ENCODE measurements at regions of chr12 and their contacts with region 1.

Region 1: DNA sequence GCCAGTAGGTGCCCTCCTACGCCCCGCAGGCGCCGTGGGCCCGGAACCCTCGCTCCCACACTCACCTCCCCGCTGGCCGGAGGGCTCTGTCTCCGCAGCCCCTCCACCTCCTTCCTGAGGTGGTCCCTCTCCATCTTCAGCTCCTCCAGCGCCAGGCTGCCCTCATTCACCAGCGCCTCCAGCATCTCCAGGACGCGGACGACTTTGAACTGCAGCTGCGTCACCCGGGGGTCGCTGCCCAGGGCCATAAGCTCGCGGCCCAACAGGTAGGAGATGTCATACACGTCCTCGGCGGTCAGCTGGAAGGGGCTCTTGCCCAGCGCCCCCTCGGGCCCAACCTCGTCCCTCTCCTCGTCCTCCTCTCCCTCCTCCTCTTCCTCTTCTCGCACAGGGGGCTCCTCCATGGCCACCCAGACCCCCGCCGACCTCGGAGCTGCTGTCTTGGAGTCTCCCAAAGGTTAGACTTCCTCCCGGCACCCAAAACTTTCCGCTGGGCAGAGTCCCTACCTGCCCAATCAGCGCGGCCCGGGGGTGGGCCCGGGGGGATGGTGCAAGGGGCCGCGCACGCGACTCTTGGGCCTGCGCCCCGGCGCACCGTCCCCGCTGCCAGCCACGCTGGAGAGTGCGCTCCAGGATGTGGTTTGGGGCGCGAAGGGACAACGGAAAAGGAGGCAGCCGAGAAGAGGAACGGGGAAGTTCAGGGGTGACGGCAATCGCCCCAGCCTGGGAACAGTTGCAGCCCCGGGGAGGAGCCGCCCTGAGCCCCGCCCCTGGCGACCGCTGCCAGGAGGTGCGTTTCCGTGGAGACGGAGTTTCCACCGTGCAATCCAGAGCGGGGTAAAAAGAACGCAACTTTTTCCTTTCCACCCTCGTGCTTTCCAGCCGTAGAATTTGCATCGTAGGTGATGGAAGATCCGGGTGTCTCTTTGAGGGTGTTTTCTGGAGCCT is at the start of gene RILPL2:
- DNase-seq: peak; percentile 92
- ATAC-seq: peak; percentile 82
- H3K4me3 Mint-ChIP-seq: peak within 1 kb of the TSS; percentile 99
- H3K27ac Mint-ChIP-seq: peak within 1 kb of the TSS; percentile 93
- H3K4me1 Mint-ChIP-seq: peaks cover 29% of the 10 kb centered on the region
- H3K27me3 Mint-ChIP-seq: no peaks in the 10 kb centered on the region
- total RNA-seq, gene RILPL2: 5.3 to 5.5 TPM

Region 2: GRCh38 chr12:123286652-123287373 is 149.5 kb before region 1 on chr12:
- POLR2A ChIA-PET with region 1: no interaction called
- DNase-seq: no peak
- ATAC-seq: no peak
- H3K4me3 Mint-ChIP-seq: no peak overlapping the region
- H3K27ac Mint-ChIP-seq: no peak overlapping the region
- H3K4me1 Mint-ChIP-seq: no peaks in the 10 kb centered on the region
- H3K27me3 Mint-ChIP-seq: no peaks in the 10 kb centered on the region

Region 3: GRCh38 chr12:123449249-123449733 is 13.0 kb after region 1 on chr12:
- POLR2A ChIA-PET with region 1: interaction called, 19 read pairs
- DNase-seq: no peak
- ATAC-seq: no peak
- H3K4me3 Mint-ChIP-seq: no peak overlapping the region
- H3K27ac Mint-ChIP-seq: peak overlapping the region; percentile 71
- H3K4me1 Mint-ChIP-seq: peaks cover 14% of the 10 kb centered on the region
- H3K27me3 Mint-ChIP-seq: no peaks in the 10 kb centered on the region

Region 4: DNA sequence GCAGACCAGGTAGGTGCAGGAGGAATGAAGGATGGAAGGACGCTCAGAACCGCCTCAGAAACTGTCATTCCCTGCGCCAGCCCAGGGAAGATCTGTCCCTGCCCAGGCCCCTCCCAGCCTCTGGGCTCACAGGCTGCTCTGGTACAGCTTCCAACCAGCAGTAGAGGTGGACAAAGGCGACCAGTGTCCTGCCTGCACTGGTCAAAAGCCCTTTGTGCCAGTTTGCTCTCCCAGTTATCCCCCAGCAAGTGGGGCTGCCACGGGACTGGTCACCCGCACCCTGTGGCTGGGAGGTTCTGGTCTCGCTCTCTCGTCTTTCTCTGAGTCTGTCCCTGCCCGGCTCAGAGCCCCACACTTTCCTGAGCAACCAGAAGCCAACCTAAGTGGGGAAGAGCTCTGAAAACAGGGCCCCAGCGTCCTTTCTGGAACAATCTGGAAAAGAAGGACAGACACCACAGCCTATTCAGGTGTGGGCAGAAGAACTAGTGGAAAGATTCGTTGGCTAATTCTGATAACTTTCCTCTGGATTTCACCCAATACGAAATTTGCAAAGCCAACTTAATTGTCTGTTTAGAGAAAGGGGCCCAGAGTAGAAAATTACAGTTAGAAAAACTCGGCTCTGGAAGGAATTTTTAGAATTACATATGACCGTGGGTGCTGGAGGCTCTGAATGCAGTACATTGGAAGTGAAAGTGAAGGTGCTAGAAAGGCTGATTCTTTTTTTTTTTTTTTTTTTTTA is 43.3 kb after region 1 on chr12:
- POLR2A ChIA-PET with region 1: no interaction called
- DNase-seq: no peak
- ATAC-seq: no peak
- H3K4me3 Mint-ChIP-seq: no peak overlapping the region
- H3K27ac Mint-ChIP-seq: no peak overlapping the region
- H3K4me1 Mint-ChIP-seq: peaks cover 25% of the 10 kb centered on the region
- H3K27me3 Mint-ChIP-seq: no peaks in the 10 kb centered on the region